PC-3 (cell line): ENCODE measurements at regions of chr12 and their contacts with region 1.

Region 1: GRCh38 chr12:95763809-95764253 is 26.7 kb downstream of the NTN4 start:
- DNase-seq: peak; percentile 96
- ATAC-seq: peak; percentile 92
- H3K4me3 ChIP-seq: no peak overlapping the region
- H3K27ac ChIP-seq: peak overlapping the region; percentile 48
- H3K4me1 ChIP-seq: peaks cover 39% of the 10 kb centered on the region
- H3K27me3 ChIP-seq: no peaks in the 10 kb centered on the region
- CTCF ChIP-seq: no peak

Region 2: DNA sequence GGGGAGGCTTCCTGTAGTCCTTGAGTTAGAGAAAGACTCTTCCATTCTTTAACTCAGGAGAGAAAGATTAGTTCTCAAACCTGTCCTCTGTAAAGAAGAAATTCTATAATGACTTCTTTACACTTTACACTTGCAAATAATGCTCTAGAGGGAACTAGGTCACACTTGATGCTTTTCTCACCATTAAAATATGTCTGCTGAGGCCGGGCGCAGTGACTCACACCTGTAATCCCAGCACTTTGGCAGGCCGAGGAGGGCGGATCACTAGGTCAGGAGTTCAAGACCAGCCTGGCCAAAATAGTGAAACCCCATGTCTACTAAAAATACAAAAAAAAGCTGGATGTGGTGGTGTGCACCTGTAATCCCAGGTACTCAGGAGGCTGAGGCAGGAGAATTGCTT is 20.5 kb after region 1 on chr12:
- CTCF ChIA-PET with region 1: no interaction called
- POLR2A ChIA-PET with region 1: interaction called, 4 read pairs
- intact Hi-C with region 1: loop called (anchors 2 kb)
- DNase-seq: no peak
- ATAC-seq: no peak
- H3K4me3 ChIP-seq: no peak overlapping the region
- H3K27ac ChIP-seq: peak overlapping the region; percentile 19; the same call in 1 of the 2 replicates
- H3K4me1 ChIP-seq: peaks cover 57% of the 10 kb centered on the region
- H3K27me3 ChIP-seq: no peaks in the 10 kb centered on the region
- CTCF ChIP-seq: no peak